ENCODE measurements at regions of chr11 and their contacts with region 1.

Region 1: GRCh38 chr11:113436672-113437252 is 38.4 kb downstream of the DRD2 start:
- DNase-seq: no peak
- ATAC-seq: no peak
- H3K4me3 Mint-ChIP-seq: no peak overlapping the region
- H3K27ac Mint-ChIP-seq: no peak overlapping the region
- H3K4me1 Mint-ChIP-seq: no peaks in the 10 kb centered on the region
- H3K27me3 Mint-ChIP-seq: peaks cover 11% of the 10 kb centered on the region

Region 2: GRCh38 chr11:113014262-113015097 is 422.3 kb before region 1 on chr11:
- CTCF ChIA-PET with region 1: no interaction called
- POLR2A ChIA-PET with region 1: no interaction called
- intact Hi-C with region 1: no loop called
- DNase-seq: no peak
- ATAC-seq: no peak
- H3K4me3 Mint-ChIP-seq: no peak overlapping the region
- H3K27ac Mint-ChIP-seq: no peak overlapping the region
- H3K4me1 Mint-ChIP-seq: no peaks in the 10 kb centered on the region
- H3K27me3 Mint-ChIP-seq: peaks cover 4% of the 10 kb centered on the region

Region 3: DNA sequence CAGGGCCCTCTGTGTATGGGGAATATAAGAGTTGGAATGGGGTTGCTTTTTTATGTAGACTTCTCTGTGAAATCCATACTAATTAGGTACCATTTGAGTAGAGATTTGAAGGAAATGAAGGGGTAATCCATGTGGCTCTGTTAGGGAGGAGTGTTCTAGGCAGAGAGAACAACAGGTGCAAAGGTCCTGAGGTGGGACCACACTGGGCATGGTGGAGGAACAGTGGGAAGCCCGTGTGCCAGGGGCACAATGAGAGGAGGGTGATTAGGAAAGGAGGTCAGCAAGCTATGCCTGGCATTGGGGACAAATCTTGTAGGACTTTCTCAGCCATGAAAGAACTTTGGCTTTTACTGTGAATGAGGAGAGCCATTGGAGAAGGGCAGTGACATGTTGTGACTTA is 45.8 kb before region 1 on chr11:
- CTCF ChIA-PET with region 1: no interaction called
- POLR2A ChIA-PET with region 1: no interaction called
- intact Hi-C with region 1: loop called in 1 of 2 experiments (anchors 1 kb)
- DNase-seq: no peak
- ATAC-seq: no peak
- H3K4me3 Mint-ChIP-seq: no peak overlapping the region
- H3K27ac Mint-ChIP-seq: no peak overlapping the region
- H3K4me1 Mint-ChIP-seq: no peaks in the 10 kb centered on the region
- H3K27me3 Mint-ChIP-seq: peaks cover 3% of the 10 kb centered on the region

Measured in activated CD4-positive, alpha-beta T cell treated with anti-CD3 and anti-CD28 coated beads for 36 hours (primary cell).